B cell (primary cell): ENCODE measurements at regions of chr20 and their contacts with region 1.

Region 1: DNA sequence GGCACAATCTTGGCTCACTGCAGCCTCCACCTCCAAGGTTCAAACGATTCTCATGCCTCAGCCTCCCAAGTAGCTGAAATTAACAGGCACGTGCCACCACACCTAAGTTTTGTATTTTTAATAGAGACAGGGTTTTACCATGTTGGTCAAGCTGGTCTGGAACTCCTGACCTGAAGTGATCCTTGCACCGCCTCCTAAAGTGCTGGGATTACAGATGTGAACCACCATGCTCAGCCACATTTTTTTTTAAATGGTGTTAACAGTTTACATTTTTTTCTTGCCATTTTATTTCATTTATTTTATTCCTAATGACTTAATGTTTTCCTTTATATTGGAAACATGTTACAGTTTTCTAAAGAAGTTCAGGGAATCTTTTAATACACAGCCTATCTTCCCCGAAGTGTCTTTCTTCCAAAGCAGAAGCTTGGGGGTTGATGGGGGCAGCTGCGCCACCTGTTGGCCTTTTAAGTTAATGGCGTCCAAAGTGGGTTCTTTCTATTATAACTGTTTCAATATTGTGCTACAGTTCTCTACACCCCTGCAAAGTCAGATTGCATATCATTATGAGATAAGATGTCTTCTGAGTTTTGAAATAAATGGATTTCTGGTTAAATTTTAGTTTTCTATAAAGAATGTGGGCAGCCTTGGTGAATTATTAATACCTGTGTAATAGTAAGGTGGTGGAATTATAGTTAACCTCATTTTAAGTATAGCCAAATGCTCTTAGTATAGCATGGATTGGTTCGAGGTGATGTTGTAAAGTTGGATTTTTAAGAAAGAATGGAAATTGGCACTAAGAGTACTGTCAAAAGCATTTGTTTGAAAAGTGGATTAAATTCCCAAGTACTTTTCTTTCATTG is 42.0 kb upstream of the PLCG1 start:
- DNase-seq: peak; percentile 76
- ATAC-seq: peak; percentile 74
- H3K4me3 ChIP-seq: no peak overlapping the region
- H3K4me3 Mint-ChIP-seq: no peak overlapping the region
- H3K27ac ChIP-seq: no peak overlapping the region
- H3K27ac Mint-ChIP-seq: no peak overlapping the region
- H3K4me1 ChIP-seq: no peaks in the 10 kb centered on the region
- H3K4me1 Mint-ChIP-seq: no peaks in the 10 kb centered on the region
- H3K27me3 ChIP-seq: no peaks in the 10 kb centered on the region
- H3K27me3 Mint-ChIP-seq: no peaks in the 10 kb centered on the region
- CTCF ChIP-seq: peak; percentile 96

Region 2: GRCh38 chr20:40120827-40121226 is 974.5 kb before region 1 on chr20:
- CTCF ChIA-PET with region 1: no interaction called
- POLR2A ChIA-PET with region 1: no interaction called
- intact Hi-C with region 1: no loop called
- DNase-seq: no peak
- ATAC-seq: no peak
- H3K4me3 ChIP-seq: no peak overlapping the region
- H3K4me3 Mint-ChIP-seq: no peak overlapping the region
- H3K27ac ChIP-seq: no peak overlapping the region
- H3K27ac Mint-ChIP-seq: no peak overlapping the region
- H3K4me1 ChIP-seq: no peaks in the 10 kb centered on the region
- H3K4me1 Mint-ChIP-seq: no peaks in the 10 kb centered on the region
- H3K27me3 ChIP-seq: peaks cover 0 to 3% (median 0%) of the 10 kb centered on the region in 4 experiments
- H3K27me3 Mint-ChIP-seq: peaks cover 6% of the 10 kb centered on the region
- CTCF ChIP-seq: no peak

Region 3: GRCh38 chr20:41064377-41064776 is 31.0 kb before region 1 on chr20:
- CTCF ChIA-PET with region 1: interaction called, 22 read pairs
- POLR2A ChIA-PET with region 1: no interaction called
- intact Hi-C with region 1: no loop called
- DNase-seq: peak; percentile 39
- ATAC-seq: peak; percentile 57
- H3K4me3 ChIP-seq: no peak overlapping the region
- H3K4me3 Mint-ChIP-seq: peak overlapping the region; percentile 24
- H3K27ac ChIP-seq: no peak overlapping the region
- H3K27ac Mint-ChIP-seq: peak overlapping the region; percentile 27
- H3K4me1 ChIP-seq: peaks cover 19 to 23% of the 10 kb centered on the region in 2 donors
- H3K4me1 Mint-ChIP-seq: peaks cover 46% of the 10 kb centered on the region
- H3K27me3 ChIP-seq: no peaks in the 10 kb centered on the region
- H3K27me3 Mint-ChIP-seq: no peaks in the 10 kb centered on the region
- CTCF ChIP-seq: no peak

Region 4: GRCh38 chr20:41078329-41078728 is 17.0 kb before region 1 on chr20:
- CTCF ChIA-PET with region 1: interaction called, 28 read pairs
- POLR2A ChIA-PET with region 1: no interaction called
- intact Hi-C with region 1: no loop called
- DNase-seq: peak; percentile 56
- ATAC-seq: peak; percentile 51
- H3K4me3 ChIP-seq: no peak overlapping the region
- H3K4me3 Mint-ChIP-seq: peak overlapping the region; percentile 35
- H3K27ac ChIP-seq: no peak overlapping the region
- H3K27ac Mint-ChIP-seq: no peak overlapping the region
- H3K4me1 ChIP-seq: peaks cover 11 to 14% of the 10 kb centered on the region in 2 donors
- H3K4me1 Mint-ChIP-seq: peaks cover 34% of the 10 kb centered on the region
- H3K27me3 ChIP-seq: no peaks in the 10 kb centered on the region
- H3K27me3 Mint-ChIP-seq: no peaks in the 10 kb centered on the region
- CTCF ChIP-seq: no peak